Activated CD4-positive, alpha-beta memory T cell treated with anti-CD3 and anti-CD28 coated beads for 36 hours (primary cell): ENCODE measurements at regions of chr3 and their contacts with region 1.

Region 1: DNA sequence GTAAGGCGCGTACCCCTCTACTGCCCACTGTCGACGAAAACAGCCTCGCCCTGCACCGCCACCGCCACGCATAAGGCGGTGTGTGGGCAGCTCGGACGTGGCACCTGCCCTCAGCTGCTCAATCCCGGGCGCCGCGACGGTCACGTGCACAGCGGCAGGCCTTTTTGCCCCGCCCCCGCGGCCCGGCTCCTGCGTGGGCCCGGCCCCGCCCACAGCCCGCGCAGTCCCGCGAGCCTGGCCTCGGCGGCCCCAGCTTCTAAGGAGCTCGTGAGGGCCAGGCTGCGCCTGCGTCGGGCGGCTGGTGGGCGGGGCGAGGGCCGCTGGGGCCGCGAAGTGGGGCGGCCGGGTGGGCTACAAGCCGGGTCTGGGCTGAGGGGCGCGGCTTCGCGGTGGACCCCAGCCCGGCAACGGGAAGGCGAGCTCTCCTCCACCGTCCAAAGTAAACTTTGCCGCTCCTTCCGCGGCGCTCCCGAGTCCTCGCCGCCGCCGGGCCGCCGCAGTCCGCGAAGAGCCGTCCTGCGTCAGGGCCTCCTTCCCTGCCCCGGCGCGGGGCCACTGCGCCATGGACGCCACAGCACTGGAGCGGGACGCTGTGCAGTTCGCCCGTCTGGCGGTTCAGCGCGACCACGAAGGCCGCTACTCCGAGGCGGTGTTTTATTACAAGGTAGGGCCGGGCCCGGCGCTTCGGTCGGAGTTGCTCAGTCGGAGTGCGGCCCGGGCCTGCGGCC is at the start of gene CAPN7:
- DNase-seq: peak; percentile 96
- H3K4me3 Mint-ChIP-seq: peak within 1 kb of the TSS; percentile 81
- H3K27ac Mint-ChIP-seq: peak within 1 kb of the TSS; percentile 82
- H3K4me1 Mint-ChIP-seq: peaks cover 29% of the 10 kb centered on the region
- H3K27me3 Mint-ChIP-seq: no peaks in the 10 kb centered on the region
- total RNA-seq, gene CAPN7: 23.6 to 28.1 TPM

Region 2: GRCh38 chr3:15064835-15065549 is 141.1 kb before region 1 on chr3 and contains the start of gene MRPS25:
- CTCF ChIA-PET with region 1: interaction called, 4 read pairs
- POLR2A ChIA-PET with region 1: interaction called, 6 read pairs
- intact Hi-C with region 1: loop called (anchors 1 kb)
- DNase-seq: peak; percentile 95
- H3K4me3 Mint-ChIP-seq: peak within 1 kb of the TSS; percentile 96
- H3K27ac Mint-ChIP-seq: peak within 1 kb of the TSS; percentile 90
- H3K4me1 Mint-ChIP-seq: peaks cover 22% of the 10 kb centered on the region
- H3K27me3 Mint-ChIP-seq: no peaks in the 10 kb centered on the region
- total RNA-seq, gene MRPS25: 53.8 to 58.5 TPM

Region 3: DNA sequence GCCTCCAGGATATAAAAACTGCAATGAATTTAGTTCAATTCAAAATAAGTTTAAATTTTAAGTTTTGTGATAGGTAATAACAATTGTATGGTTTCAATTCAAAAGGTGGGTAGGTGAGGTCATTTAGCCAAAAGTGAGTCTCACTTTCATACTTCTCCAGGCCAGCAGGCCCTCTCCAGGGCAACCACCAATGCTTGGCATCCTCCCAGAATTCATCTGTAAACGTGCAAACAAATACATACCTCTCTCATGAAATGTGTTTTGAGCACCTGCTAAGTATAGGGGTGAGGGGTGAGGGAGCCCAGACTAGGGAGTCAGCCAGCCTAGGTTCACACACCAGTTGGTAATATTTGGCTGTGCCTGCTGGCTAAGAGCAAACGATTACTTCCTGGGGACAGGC is 85.1 kb before region 1 on chr3:
- CTCF ChIA-PET with region 1: interaction called, 12 read pairs
- POLR2A ChIA-PET with region 1: interaction called, 5 read pairs
- intact Hi-C with region 1: no loop called
- DNase-seq: no peak
- H3K4me3 Mint-ChIP-seq: no peak overlapping the region
- H3K27ac Mint-ChIP-seq: no peak overlapping the region
- H3K4me1 Mint-ChIP-seq: peaks cover 4% of the 10 kb centered on the region
- H3K27me3 Mint-ChIP-seq: peaks cover 1% of the 10 kb centered on the region

Region 4: DNA sequence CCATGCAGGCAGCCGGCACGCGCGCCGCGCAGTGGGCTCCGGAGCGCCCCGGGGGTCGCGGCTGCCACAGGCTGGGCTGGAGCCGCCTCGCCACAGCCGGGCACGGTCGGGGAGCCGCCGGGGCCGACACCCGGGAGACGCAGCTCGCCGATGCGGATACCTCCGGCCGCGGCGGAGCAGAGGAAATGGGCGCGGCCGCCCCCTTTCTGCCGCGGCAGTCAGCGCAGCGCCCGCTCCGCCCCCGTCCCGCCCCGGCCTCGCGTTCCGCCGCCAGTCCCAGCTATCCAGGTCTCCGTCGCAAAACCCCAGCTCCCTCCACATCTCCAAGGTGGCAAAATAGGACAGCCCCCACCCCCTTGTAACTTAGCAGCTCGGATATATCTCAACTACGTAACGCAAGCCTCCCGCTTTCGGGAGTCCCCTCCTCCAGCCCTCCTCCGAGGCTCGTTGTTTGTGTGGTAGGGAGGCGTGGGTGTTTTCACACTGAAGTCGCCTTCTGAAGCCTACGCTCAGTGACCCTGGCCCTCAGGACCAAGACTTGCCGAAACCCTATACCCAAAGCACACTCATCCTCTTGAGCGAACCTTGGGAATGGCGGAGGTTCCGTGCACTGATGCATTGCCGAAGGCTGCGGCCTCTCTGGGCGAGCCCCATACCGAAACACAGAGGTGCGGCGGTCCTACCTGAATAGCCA is 126.5 kb after region 1 on chr3 and contains the start of gene SH3BP5:
- CTCF ChIA-PET with region 1: no interaction called
- POLR2A ChIA-PET with region 1: no interaction called
- intact Hi-C with region 1: loop called (anchors 5 kb)
- DNase-seq: peak; percentile 82
- H3K4me3 Mint-ChIP-seq: peak within 1 kb of the TSS; percentile 83
- H3K27ac Mint-ChIP-seq: peak within 1 kb of the TSS; percentile 78
- H3K4me1 Mint-ChIP-seq: peaks cover 54% of the 10 kb centered on the region
- H3K27me3 Mint-ChIP-seq: no peaks in the 10 kb centered on the region
- total RNA-seq, gene SH3BP5: 33.6 to 37.5 TPM

Region 5: DNA sequence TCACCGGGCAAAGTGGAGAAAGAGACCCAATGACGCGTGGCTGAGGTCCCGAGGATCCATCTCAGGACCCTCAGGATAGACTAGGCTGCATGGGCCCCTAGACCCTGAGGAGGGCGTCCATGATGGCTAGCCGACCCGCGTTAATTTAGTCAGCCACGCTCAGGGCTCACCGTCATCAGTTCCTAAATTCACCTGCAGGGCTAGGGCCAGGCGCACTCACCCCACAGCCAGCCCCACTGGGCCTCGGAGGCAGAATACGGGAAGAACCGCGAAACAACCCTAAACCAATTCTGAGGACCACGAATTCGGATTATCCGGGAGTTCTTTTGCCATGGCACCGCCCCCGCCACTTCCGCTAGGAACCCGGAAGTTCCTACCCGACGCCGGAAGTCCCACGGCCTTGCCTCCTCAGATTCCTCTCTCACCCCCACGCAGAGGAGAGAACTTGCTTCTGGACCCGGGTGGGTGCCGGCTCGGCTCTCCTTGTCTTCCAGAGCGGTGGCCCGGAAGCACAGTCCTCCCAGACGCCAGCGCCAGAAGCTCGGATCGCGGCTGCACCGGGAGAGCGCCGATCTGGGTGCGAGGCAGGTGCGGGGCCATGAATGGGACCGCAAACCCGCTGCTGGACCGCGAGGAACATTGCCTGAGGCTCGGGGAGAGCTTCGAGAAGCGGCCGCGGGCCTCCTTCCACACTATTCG is 221.2 kb after region 1 on chr3 and contains the starts of genes EAF1 and METTL6:
- CTCF ChIA-PET with region 1: interaction called, 8 read pairs
- POLR2A ChIA-PET with region 1: no interaction called
- intact Hi-C with region 1: loop called (anchors 5 kb)
- DNase-seq: peak; percentile 92
- H3K4me3 Mint-ChIP-seq: peak within 1 kb of the TSS; percentile 94
- H3K27ac Mint-ChIP-seq: peak within 1 kb of the TSS; percentile 82
- H3K4me1 Mint-ChIP-seq: peaks cover 53% of the 10 kb centered on the region
- H3K27me3 Mint-ChIP-seq: no peaks in the 10 kb centered on the region
- total RNA-seq, gene EAF1: 23.4 to 23.6 TPM
- total RNA-seq, gene METTL6: 17.3 to 17.8 TPM

Region 6: GRCh38 chr3:15815696-15816095 is 609.6 kb after region 1 on chr3:
- CTCF ChIA-PET with region 1: no interaction called
- POLR2A ChIA-PET with region 1: no interaction called
- intact Hi-C with region 1: loop called (anchors 5 kb)
- DNase-seq: no peak
- H3K4me3 Mint-ChIP-seq: no peak overlapping the region
- H3K27ac Mint-ChIP-seq: no peak overlapping the region
- H3K4me1 Mint-ChIP-seq: peaks cover 48% of the 10 kb centered on the region
- H3K27me3 Mint-ChIP-seq: no peaks in the 10 kb centered on the region

Region 7: GRCh38 chr3:16247276-16248061 is 1041.4 kb after region 1 on chr3:
- CTCF ChIA-PET with region 1: no interaction called
- POLR2A ChIA-PET with region 1: no interaction called
- intact Hi-C with region 1: loop called (anchors 10 kb)
- DNase-seq: peak; percentile 84
- H3K4me3 Mint-ChIP-seq: no peak overlapping the region
- H3K27ac Mint-ChIP-seq: no peak overlapping the region
- H3K4me1 Mint-ChIP-seq: peaks cover 17% of the 10 kb centered on the region
- H3K27me3 Mint-ChIP-seq: no peaks in the 10 kb centered on the region